Activated naive CD4-positive, alpha-beta T cell treated with anti-CD3 and anti-CD28 coated beads for 36 hours (primary cell): ENCODE measurements at regions of chr6 and their contacts with region 1.

Region 1: DNA sequence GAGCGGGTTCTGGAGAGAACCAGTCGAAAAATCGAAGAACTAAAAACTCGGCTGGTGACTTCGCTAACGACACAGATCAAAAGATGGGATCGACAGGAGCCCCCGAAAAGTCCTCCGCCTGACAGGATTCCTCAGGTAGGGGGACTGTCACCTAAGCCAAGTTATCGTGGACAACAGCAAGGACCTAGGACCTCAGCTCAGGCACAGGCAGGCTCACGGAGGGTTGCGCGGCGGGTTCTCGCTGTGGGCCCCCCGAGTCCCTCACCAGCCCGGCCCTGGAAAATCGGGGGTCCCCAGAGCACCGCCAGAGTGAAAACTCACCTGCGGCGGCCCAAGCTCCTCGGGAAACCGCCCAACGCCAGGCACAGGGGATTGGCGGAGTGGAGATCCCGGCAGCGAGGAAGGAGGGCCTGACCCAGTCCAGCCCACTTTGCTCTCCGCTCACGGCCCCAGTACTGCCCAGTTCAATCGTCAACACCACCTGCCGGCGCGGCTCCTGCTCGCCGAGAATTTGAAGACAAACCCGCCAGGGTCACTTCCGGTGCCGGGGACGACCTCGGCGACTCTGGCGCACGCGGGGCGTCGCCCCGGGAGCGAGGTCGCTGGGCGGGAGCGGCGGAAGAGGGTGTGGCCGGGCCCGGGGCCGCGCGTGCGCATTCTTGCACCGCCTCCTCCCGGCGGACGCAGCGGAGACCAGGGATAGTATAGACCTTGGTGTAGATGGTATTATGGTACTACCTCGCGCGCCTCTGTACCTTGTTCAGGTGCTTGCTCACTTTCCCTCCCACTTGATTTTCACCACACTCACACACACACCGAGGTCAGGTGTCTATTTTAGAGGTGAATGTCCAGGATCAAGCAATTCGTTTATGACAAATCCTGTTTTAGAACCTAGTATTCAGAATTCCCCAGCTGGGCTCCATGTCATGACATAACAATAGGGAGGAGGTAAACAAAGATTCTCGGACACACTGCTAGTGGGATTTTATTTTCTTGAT is at the start of gene KATNA1:
- DNase-seq: peak; percentile 90
- H3K4me3 Mint-ChIP-seq: peak within 1 kb of the TSS; percentile 79
- H3K27ac Mint-ChIP-seq: peak within 1 kb of the TSS; percentile 65
- H3K4me1 Mint-ChIP-seq: peaks cover 22% of the 10 kb centered on the region
- H3K27me3 Mint-ChIP-seq: no peaks in the 10 kb centered on the region
- total RNA-seq, gene KATNA1: 18.2 to 19.7 TPM

Region 2: DNA sequence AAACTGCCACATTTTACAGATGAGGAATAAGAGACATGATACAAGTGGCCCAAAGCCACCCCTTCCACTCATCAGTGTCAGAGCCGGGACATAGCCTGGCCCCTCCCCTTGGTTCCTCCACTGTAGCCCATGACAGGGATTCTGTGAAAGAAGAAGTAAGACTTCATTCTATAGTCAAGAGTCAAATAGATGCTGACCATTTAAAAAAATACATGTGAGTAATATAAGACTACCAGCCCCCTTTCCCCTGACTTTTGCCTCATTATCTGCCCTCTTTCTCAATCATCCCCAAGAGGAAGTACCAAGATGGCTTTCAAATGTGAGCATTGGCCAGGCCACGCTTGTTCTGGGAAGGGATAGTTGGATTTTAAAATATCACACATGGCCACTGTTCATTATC is 388.7 kb before region 1 on chr6:
- CTCF ChIA-PET with region 1: no interaction called
- intact Hi-C with region 1: no loop called
- DNase-seq: no peak
- H3K4me3 Mint-ChIP-seq: no peak overlapping the region
- H3K27ac Mint-ChIP-seq: no peak overlapping the region
- H3K4me1 Mint-ChIP-seq: peaks cover 21% of the 10 kb centered on the region
- H3K27me3 Mint-ChIP-seq: no peaks in the 10 kb centered on the region

Region 3: DNA sequence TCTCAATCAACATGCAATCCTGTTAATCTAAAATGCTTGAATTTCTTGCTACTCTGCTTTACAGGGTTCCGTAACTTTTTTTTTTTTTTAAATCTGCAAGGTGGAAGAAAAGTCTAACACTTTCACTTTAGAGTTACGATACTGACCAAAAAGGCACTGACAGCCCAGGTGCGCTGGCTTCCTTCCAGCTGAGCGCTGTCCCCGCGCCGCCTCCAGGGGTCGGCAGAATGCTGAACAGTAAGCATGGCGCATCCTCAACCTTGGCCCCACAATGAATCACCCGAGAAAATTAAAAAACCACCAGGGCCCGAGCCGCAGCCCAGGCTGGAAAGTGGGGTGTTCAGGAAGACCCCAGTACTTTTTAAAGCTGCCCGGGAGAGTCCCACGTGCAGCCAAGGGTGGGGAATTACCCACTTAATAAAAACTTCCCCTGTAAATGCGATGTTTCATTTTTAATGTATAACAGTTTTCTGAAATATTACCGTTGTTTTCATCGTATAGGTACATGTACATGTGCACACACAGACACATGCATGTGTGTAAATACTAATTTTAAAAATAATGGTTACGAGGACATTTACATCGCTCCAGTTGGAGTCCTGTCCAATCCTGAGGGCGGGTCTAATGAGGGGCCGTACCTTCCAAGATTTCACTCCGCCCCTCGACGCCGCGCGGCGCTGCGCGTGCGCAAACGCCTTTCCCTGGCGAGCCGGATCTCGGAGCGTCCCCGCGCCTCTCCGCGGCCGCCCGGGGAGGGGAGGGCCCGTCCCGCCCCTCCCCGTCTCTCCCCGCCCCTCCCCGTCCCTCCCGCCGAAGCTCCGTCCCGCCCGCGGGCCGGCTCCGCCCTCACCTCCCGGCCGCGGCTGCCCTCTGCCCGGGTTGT is 82.7 kb before region 1 on chr6 and contains the start of gene GINM1:
- CTCF ChIA-PET with region 1: interaction called, 4 read pairs
- intact Hi-C with region 1: loop called (anchors 1 kb)
- DNase-seq: peak; percentile 97
- H3K4me3 Mint-ChIP-seq: peak within 1 kb of the TSS; percentile 92
- H3K27ac Mint-ChIP-seq: peak within 1 kb of the TSS; percentile 89
- H3K4me1 Mint-ChIP-seq: peaks cover 26% of the 10 kb centered on the region
- H3K27me3 Mint-ChIP-seq: no peaks in the 10 kb centered on the region
- total RNA-seq, gene GINM1: 17.6 to 18.4 TPM

Region 4: GRCh38 chr6:149686230-149686629 is 37.8 kb after region 1 on chr6:
- CTCF ChIA-PET with region 1: no interaction called
- intact Hi-C with region 1: loop called (anchors 1 kb)
- DNase-seq: no peak
- H3K4me3 Mint-ChIP-seq: no peak overlapping the region
- H3K27ac Mint-ChIP-seq: peak overlapping the region; percentile 46
- H3K4me1 Mint-ChIP-seq: peaks cover 22% of the 10 kb centered on the region
- H3K27me3 Mint-ChIP-seq: no peaks in the 10 kb centered on the region

Region 5: GRCh38 chr6:149717588-149718458 is 69.4 kb after region 1 on chr6 and contains the start of gene LATS1:
- CTCF ChIA-PET with region 1: no interaction called
- intact Hi-C with region 1: loop called (anchors 1 kb)
- DNase-seq: peak; percentile 95
- H3K4me3 Mint-ChIP-seq: peak within 1 kb of the TSS; percentile 84
- H3K27ac Mint-ChIP-seq: peak within 1 kb of the TSS; percentile 94
- H3K4me1 Mint-ChIP-seq: peaks cover 25% of the 10 kb centered on the region
- H3K27me3 Mint-ChIP-seq: no peaks in the 10 kb centered on the region
- total RNA-seq, gene LATS1: 18.1 to 19.6 TPM

Region 6: DNA sequence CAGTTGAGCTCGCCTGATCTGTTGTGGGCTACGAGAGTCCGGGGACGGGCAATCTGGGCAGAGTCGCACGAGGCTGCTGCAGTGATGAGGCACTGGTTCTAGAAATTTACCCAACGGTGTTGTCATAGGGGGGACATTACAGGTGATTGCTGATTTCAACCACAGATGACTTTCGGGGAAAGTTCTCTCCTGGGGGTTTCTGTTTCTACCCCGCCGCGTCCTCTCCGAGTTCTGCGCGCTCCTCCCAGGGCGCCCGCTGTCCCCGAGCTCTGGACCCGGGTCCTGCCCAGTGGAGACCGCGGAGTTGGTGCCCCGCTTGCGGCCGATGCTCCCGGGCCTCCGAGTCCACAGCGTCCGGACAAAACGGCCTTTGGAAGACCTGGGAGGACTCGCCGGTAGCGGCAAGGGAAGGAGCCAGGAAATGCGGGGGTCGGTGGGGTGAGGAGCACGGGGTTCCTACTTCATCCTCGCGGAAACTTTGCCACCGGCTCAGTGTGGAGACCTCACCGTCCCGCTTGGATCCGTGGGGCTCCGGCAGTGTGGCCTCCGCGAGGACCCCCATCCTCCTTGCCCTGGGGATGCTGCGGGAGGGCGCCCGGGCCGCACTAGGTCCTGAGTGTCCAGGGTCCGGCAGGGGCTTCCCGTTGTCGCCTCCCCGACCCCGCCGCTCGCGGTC is 389.2 kb after region 1 on chr6:
- CTCF ChIA-PET with region 1: no interaction called
- intact Hi-C with region 1: no loop called
- DNase-seq: no peak
- H3K4me3 Mint-ChIP-seq: peak overlapping the region; percentile 15
- H3K27ac Mint-ChIP-seq: no peak overlapping the region
- H3K4me1 Mint-ChIP-seq: peaks cover 11% of the 10 kb centered on the region
- H3K27me3 Mint-ChIP-seq: peaks cover 67% of the 10 kb centered on the region